CD8-positive, alpha-beta T cell (primary cell): ENCODE measurements at regions of chr2 and their contacts with region 1.

Region 1: GRCh38 chr2:169528271-169528701 is 18.8 kb downstream of the KLHL41 start:
- DNase-seq: peak; percentile 50 to 82 (median 76)
- ATAC-seq: peak; percentile 89
- H3K4me3 ChIP-seq: no peak overlapping the region
- H3K4me3 Mint-ChIP-seq: no peak overlapping the region
- H3K27ac ChIP-seq: no peak overlapping the region
- H3K27ac Mint-ChIP-seq: no peak overlapping the region
- H3K4me1 ChIP-seq: no peaks in the 10 kb centered on the region
- H3K4me1 Mint-ChIP-seq: no peaks in the 10 kb centered on the region
- H3K27me3 ChIP-seq: no peaks in the 10 kb centered on the region
- H3K27me3 Mint-ChIP-seq: no peaks in the 10 kb centered on the region
- CTCF ChIP-seq: peak; percentile 88

Region 2: GRCh38 chr2:167844714-167845530 is 1683.4 kb before region 1 on chr2:
- CTCF ChIA-PET with region 1: no interaction called
- POLR2A ChIA-PET with region 1: no interaction called
- intact Hi-C with region 1: no loop called
- DNase-seq: no peak
- ATAC-seq: no peak
- H3K4me3 ChIP-seq: no peak overlapping the region
- H3K4me3 Mint-ChIP-seq: no peak overlapping the region
- H3K27ac ChIP-seq: no peak overlapping the region
- H3K27ac Mint-ChIP-seq: no peak overlapping the region
- H3K4me1 ChIP-seq: no peaks in the 10 kb centered on the region
- H3K4me1 Mint-ChIP-seq: no peaks in the 10 kb centered on the region
- H3K27me3 ChIP-seq: no peaks in the 10 kb centered on the region
- H3K27me3 Mint-ChIP-seq: peaks cover 9% of the 10 kb centered on the region
- CTCF ChIP-seq: no peak

Region 3: DNA sequence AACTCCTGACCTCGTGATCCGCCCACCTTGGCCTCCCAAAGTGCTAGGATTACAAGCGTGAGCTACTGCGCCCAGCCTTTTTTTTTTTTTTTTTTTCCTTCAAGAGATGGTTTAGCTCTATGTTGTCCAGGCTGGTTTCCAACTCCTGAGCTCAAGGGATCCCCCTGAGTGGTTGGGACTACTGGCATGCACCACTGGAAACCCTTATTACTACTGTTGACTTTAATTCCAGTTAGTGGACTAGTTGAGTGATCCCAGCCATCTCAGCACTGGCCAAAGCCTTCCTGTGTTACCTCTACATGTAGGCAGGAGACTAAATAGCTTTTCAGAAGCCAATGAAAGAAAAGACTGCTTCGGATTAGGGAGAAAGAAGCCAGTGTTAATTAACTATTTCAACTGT is 262.3 kb after region 1 on chr2:
- CTCF ChIA-PET with region 1: interaction called, 3 read pairs
- POLR2A ChIA-PET with region 1: no interaction called
- intact Hi-C with region 1: loop called in 1 of 2 experiments (anchors 1 kb)
- DNase-seq: no peak
- ATAC-seq: no peak
- H3K4me3 ChIP-seq: no peak overlapping the region
- H3K4me3 Mint-ChIP-seq: no peak overlapping the region
- H3K27ac ChIP-seq: no peak overlapping the region
- H3K27ac Mint-ChIP-seq: no peak overlapping the region
- H3K4me1 ChIP-seq: no peaks in the 10 kb centered on the region
- H3K4me1 Mint-ChIP-seq: peaks cover 6% of the 10 kb centered on the region
- H3K27me3 ChIP-seq: peaks cover 3 to 6% of the 10 kb centered on the region in 2 experiments
- H3K27me3 Mint-ChIP-seq: peaks cover 16% of the 10 kb centered on the region
- CTCF ChIP-seq: no peak

Region 4: DNA sequence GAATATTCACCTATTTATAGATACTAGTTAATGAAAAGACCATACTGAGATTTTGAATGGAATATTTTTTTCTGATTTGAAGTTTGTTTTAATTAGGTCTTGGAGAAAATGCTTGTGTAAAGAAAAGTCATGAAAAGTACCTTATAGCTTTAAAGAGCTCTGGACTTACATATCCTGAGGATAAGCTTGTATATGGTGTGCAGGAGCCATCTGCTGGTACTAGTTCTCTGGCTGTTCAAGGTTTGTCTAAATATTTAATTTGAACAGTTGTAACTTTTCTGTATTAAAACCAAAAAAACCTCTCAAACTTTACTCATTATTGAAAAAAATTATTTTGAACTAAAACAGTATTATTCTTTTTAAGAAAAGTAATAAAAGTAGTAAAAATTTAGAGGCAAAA is 349.1 kb after region 1 on chr2:
- CTCF ChIA-PET with region 1: no interaction called
- POLR2A ChIA-PET with region 1: no interaction called
- intact Hi-C with region 1: loop called in 1 of 2 experiments (anchors 5 kb)
- DNase-seq: peak in 3 of 9 experiments; percentile 21 to 28 (median 21)
- ATAC-seq: no peak
- H3K4me3 ChIP-seq: no peak overlapping the region
- H3K4me3 Mint-ChIP-seq: no peak overlapping the region
- H3K27ac ChIP-seq: no peak overlapping the region
- H3K27ac Mint-ChIP-seq: no peak overlapping the region
- H3K4me1 ChIP-seq: no peaks in the 10 kb centered on the region
- H3K4me1 Mint-ChIP-seq: no peaks in the 10 kb centered on the region
- H3K27me3 ChIP-seq: no peaks in the 10 kb centered on the region
- H3K27me3 Mint-ChIP-seq: no peaks in the 10 kb centered on the region
- CTCF ChIP-seq: peak; percentile 30

Region 5: GRCh38 chr2:169928463-169928864 is 400.2 kb after region 1 on chr2:
- CTCF ChIA-PET with region 1: interaction called, 8 read pairs
- POLR2A ChIA-PET with region 1: no interaction called
- intact Hi-C with region 1: loop called (anchors 1 kb)
- DNase-seq: peak in 2 of 9 experiments; percentile 49 to 58
- ATAC-seq: peak; percentile 54
- H3K4me3 ChIP-seq: no peak overlapping the region
- H3K4me3 Mint-ChIP-seq: no peak overlapping the region
- H3K27ac ChIP-seq: no peak overlapping the region
- H3K27ac Mint-ChIP-seq: no peak overlapping the region
- H3K4me1 ChIP-seq: no peaks in the 10 kb centered on the region
- H3K4me1 Mint-ChIP-seq: no peaks in the 10 kb centered on the region
- H3K27me3 ChIP-seq: no peaks in the 10 kb centered on the region
- H3K27me3 Mint-ChIP-seq: no peaks in the 10 kb centered on the region
- CTCF ChIP-seq: peak; percentile 97